ENCODE measurements at regions of chr6 and their contacts with region 1.

Region 1: GRCh38 chr6:129370268-129370916 is 339.6 kb downstream of the ARHGAP18 start:
- DNase-seq: peak in 4 of 5 donors; percentile 25 to 60 (median 38)
- H3K4me3 ChIP-seq: no peak overlapping the region
- H3K27ac ChIP-seq: no peak overlapping the region
- H3K4me1 ChIP-seq: peaks cover 2% of the 10 kb centered on the region
- H3K27me3 ChIP-seq: no peaks in the 10 kb centered on the region
- CTCF ChIP-seq: peak; percentile 37 to 52 (median 43)
- EP300 ChIP-seq: no peak
- POLR2A ChIP-seq: no peak

Region 2: DNA sequence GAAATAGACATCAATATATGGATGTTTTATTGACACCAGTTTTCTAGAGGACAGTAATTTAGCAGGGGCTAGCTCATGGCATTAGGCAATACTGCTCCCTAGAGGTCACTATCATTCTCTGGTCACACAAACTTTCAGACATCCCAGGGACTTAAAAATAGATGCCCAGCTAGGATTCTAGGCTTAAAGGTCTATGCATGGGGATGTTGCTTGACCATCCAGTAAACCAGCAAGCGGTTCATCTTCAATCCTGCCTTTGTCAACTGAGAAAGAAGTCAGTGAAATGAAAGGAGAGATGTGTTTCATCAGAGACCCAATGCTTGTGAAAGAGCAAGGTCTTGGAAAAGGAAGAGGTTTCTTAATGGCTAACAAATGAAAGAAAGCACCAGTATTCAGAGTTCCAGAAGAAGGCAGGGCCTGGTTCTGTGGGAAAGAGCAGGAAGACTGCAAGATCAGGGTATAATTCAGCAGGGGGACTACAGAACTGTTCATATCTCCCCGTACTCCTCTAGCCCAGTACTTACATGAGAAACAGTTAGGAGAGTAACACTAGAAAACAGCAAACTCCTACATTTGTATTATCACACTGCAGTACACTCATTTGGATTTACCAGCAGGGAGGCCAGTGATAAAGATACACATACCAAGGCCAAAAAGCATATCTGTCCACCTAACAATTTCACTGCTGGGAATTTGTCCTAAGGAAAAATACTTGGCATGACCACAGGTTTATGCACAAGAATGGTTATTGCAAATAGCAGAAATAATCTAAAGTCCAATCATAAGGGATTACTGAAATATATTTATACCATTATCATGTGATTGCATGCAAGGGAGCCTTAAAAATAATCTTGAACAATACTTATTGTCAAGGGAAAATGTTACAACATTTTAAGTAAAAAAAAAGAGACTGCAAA is 638.9 kb before region 1 on chr6:
- intact Hi-C with region 1: loop called in 1 of 4 experiments (anchors 10 kb)
- DNase-seq: no peak
- H3K4me3 ChIP-seq: no peak overlapping the region
- H3K27ac ChIP-seq: no peak overlapping the region
- H3K4me1 ChIP-seq: peaks cover 2% of the 10 kb centered on the region
- H3K27me3 ChIP-seq: no peaks in the 10 kb centered on the region
- CTCF ChIP-seq: no peak
- EP300 ChIP-seq: no peak
- POLR2A ChIP-seq: no peak

Region 3: GRCh38 chr6:128807577-128807976 is 562.8 kb before region 1 on chr6:
- intact Hi-C with region 1: loop called in 1 of 4 experiments (anchors 5 kb)
- DNase-seq: no peak
- H3K4me3 ChIP-seq: no peak overlapping the region
- H3K27ac ChIP-seq: no peak overlapping the region
- H3K4me1 ChIP-seq: no peaks in the 10 kb centered on the region
- H3K27me3 ChIP-seq: no peaks in the 10 kb centered on the region
- CTCF ChIP-seq: peak in 1 of 3 donors; percentile 45
- EP300 ChIP-seq: no peak
- POLR2A ChIP-seq: no peak

Measured in ovary (tissue), 10 donors.